BJ (cell line): ENCODE measurements at regions of chr14 and their contacts with region 1.

Region 1: GRCh38 chr14:103581206-103581605 is 18.4 kb downstream of the COA8 start:
- DNase-seq: no peak
- H3K4me3 ChIP-seq: no peak overlapping the region
- H3K27me3 ChIP-seq: no peaks in the 10 kb centered on the region
- CTCF ChIP-seq: no peak

Region 2: GRCh38 chr14:103594265-103594664 is 13.1 kb after region 1 on chr14:
- CTCF ChIA-PET with region 1: interaction called, 4 read pairs
- POLR2A ChIA-PET with region 1: interaction called, 12 read pairs
- DNase-seq: peak; percentile 49
- H3K4me3 ChIP-seq: no peak overlapping the region
- H3K27me3 ChIP-seq: no peaks in the 10 kb centered on the region
- CTCF ChIP-seq: no peak